Adrenal gland (tissue), 19 donors: ENCODE measurements at regions of chr9 and their contacts with region 1.

Region 1: GRCh38 chr9:77569173-77569734 is 78.9 kb downstream of the GNA14 start:
- DNase-seq: no peak
- H3K4me3 ChIP-seq: no peak overlapping the region
- H3K27ac ChIP-seq: no peak overlapping the region
- H3K4me1 ChIP-seq: no peaks in the 10 kb centered on the region
- H3K27me3 ChIP-seq: no peaks in the 10 kb centered on the region
- CTCF ChIP-seq: no peak
- POLR2A ChIP-seq: no peak

Region 2: DNA sequence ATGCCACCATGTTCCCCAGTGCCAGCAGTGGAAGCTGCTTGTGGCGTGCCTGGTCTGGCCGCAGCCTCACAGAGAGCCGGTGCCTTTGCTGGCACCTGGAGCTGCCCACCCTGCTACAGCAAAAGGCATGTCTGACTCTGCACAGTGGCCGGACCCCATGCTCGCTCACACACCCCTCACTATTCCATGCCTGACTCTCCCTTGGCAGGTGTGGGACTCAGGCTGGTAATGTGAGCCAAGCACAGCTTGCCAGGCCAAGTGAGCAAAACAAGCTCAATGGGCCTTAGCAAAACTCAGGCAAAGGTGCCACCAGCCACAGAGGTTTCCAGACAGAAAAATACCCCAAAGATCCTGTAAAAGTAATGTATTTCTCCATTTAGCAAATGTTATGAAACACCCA is 63.4 kb after region 1 on chr9:
- intact Hi-C with region 1: loop called in 1 of 2 experiments (anchors 10 kb)
- DNase-seq: no peak
- H3K4me3 ChIP-seq: no peak overlapping the region
- H3K27ac ChIP-seq: no peak overlapping the region
- H3K4me1 ChIP-seq: no peaks in the 10 kb centered on the region
- H3K27me3 ChIP-seq: no peaks in the 10 kb centered on the region
- CTCF ChIP-seq: no peak
- POLR2A ChIP-seq: no peak